Activated CD4-positive, alpha-beta T cell treated with anti-CD3 and anti-CD28 coated beads for 36 hours (primary cell): ENCODE measurements at regions of chr7 and their contacts with region 1.

Region 1: DNA sequence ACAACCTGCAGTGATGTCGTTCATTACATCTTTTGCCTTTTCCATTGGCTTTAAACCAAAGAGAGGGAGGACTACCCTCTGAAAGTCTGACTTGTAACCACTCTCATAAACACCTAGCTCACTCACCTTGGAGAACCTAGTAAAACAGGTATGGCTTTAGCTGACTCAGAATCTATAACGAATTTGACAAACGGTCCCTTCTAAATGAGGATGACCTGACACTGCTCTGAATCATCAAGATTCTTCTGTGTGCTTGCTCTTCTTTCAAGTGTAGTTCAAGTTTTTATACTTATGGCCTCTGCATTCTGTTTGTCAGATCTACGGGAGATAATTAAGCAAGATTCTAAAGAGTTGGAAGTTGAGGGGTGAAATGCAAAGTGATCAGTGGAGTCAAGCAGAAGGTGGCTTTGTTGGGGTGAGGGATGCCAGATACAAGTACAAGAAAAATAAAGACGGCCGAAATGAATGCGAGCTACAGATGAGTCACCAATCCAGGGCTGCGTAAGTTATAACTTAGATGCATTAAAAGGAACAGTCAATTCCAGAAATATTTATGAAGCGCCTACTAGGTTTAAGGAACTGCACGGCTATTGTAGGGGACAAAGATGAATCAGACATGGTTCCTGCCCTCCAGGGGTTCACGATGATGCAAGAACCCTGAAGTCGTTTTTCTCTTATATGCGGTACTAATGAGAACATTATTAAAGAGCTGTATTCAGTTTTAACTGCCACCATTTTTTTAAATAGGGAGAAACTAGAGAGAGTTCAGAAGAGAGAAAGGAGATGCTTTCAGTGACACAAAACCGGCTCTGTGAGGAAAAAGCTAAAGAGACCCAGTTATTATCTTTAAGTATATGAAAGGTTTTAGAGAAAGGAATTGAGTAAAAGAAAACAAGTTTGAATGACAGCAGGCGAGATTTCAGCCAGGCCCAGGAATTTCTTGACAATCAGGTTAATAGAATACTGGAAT is 6.5 kb downstream of the HIPK2 start:
- DNase-seq: no peak
- ATAC-seq: peak; percentile 37
- H3K4me3 Mint-ChIP-seq: peak overlapping the region; percentile 5
- H3K27ac Mint-ChIP-seq: peak overlapping the region; percentile 79
- H3K4me1 Mint-ChIP-seq: peaks cover 90% of the 10 kb centered on the region
- H3K27me3 Mint-ChIP-seq: no peaks in the 10 kb centered on the region

Region 2: GRCh38 chr7:139680676-139681462 is 90.4 kb before region 1 on chr7:
- CTCF ChIA-PET with region 1: no interaction called
- POLR2A ChIA-PET with region 1: interaction called, 6 read pairs
- intact Hi-C with region 1: loop called (anchors 1 kb)
- DNase-seq: peak; percentile 94
- ATAC-seq: peak; percentile 73
- H3K4me3 Mint-ChIP-seq: peak overlapping the region; percentile 68
- H3K27ac Mint-ChIP-seq: peak overlapping the region; percentile 98
- H3K4me1 Mint-ChIP-seq: peaks cover 53% of the 10 kb centered on the region
- H3K27me3 Mint-ChIP-seq: no peaks in the 10 kb centered on the region

Region 3: DNA sequence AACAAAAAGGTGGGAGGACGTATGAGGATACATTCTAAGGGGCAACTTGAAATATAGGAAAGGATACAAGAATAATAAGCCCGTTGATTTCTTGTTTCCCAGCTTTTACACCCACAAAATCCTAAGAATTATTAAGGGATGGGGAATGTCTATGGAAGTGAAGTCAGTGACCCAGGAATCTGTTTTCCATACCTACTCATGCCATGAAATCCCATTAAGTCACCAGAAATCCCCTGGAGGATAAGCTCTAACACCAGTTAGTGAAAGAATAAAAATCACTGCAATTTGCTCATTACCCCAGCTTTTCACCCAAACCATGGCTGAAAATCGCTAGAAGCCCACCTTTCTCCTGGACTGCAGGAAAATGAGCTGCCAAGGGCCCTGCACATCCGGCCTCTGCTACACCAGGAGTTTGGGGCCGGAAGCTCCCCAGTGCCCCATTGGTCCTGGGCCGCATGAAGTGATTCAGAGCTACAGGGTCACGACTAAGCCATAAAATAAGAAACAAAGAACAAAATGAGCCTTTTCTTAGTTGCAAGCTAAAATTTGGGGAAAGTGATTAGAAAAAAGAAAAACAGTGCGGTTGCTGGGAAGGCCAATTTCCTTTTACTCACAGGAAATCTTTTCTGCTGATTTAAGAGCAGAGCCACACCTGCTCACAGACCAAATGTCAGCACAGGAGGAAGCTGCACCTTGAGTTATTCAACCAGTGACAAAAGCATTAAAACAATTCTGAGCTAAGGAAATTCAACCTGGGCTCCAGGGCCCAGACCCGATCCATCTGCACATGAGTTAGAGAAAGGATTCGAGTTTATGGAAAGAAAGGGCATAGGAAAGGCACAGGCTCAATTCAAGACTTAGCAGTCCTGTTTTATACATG is 33.8 kb before region 1 on chr7:
- CTCF ChIA-PET with region 1: interaction called, 4 read pairs
- POLR2A ChIA-PET with region 1: no interaction called
- intact Hi-C with region 1: loop called (anchors 1 to 5 kb)
- DNase-seq: peak; percentile 68
- ATAC-seq: peak; percentile 96
- H3K4me3 Mint-ChIP-seq: peak overlapping the region; percentile 49
- H3K27ac Mint-ChIP-seq: peak overlapping the region; percentile 88
- H3K4me1 Mint-ChIP-seq: peaks cover 71% of the 10 kb centered on the region
- H3K27me3 Mint-ChIP-seq: no peaks in the 10 kb centered on the region

Region 4: DNA sequence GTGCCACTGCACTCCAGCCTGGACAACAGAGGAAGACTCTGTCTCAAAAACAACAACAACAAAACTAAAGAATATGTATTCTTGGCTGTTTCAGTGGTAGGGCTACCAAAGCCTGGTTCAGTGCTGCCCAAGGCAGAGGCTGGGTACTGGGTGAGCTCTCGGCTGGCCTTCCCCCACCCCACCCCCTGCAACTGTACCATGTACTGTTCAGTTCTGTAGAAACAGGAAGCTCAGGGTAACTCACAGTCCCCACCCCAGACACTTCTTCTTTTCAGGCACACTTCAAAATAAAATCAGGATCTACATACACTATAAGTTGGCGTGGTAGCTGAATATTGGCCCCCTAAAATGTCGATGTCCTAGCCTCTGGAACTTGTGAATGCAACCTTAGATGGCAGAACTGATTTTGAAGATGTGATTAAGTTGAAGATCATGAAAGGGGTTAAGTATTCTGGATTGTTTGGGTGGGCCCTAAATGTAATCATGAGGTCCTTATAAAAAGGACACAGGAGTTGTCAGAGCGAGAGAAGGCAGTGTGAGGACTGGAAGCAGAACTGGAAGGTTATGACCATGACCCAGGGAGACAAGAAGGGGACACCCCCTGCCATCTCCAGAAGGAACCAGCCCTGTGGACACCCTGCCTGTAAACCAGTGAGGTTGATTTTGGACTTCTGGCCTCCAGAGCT is 88.9 kb after region 1 on chr7:
- CTCF ChIA-PET with region 1: no interaction called
- POLR2A ChIA-PET with region 1: no interaction called
- intact Hi-C with region 1: no loop called
- DNase-seq: no peak
- ATAC-seq: no peak
- H3K4me3 Mint-ChIP-seq: no peak overlapping the region
- H3K27ac Mint-ChIP-seq: no peak overlapping the region
- H3K4me1 Mint-ChIP-seq: peaks cover 17% of the 10 kb centered on the region
- H3K27me3 Mint-ChIP-seq: peaks cover 6% of the 10 kb centered on the region

Region 5: GRCh38 chr7:140209866-140210609 is 438.8 kb after region 1 on chr7:
- CTCF ChIA-PET with region 1: no interaction called
- POLR2A ChIA-PET with region 1: no interaction called
- intact Hi-C with region 1: loop called in 1 of 2 experiments (anchors 5 kb)
- DNase-seq: peak; percentile 83
- ATAC-seq: peak; percentile 62
- H3K4me3 Mint-ChIP-seq: peak overlapping the region; percentile 2
- H3K27ac Mint-ChIP-seq: peak overlapping the region; percentile 88
- H3K4me1 Mint-ChIP-seq: peaks cover 80% of the 10 kb centered on the region
- H3K27me3 Mint-ChIP-seq: no peaks in the 10 kb centered on the region

Region 6: DNA sequence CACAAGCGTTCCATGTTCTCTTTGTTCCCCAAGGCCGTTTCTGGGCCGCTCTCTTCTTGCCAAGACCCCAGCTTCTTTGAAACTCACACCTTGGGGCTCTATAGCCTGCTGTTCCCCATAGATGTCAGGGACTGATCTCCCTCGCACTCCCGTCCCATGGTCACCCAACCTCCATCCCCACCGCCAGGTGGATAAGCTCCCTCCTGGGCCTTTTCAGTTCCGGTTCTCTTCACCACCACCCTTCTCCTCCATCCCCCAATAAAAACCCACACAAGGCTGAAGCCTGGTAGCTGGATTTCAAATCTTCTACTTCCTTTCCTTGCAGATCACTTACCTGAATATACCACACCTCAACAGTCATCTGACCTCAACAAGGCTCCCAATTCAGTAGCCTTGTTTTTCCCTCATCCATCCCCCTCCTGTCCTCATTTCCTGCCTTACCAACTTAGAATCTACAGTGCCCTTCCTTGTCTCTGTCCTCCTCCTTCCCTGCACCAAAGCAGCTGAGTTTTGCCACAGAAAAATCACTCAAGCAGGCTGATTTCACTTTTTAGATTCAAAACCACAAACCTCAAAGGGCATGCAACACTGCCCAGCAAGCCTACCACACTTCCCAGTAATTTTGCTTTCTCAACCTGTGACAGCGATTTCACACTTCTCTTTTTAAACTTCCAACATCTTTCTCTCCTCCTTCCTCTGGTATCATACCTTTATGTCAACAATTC is 619.3 kb after region 1 on chr7:
- CTCF ChIA-PET with region 1: no interaction called
- POLR2A ChIA-PET with region 1: no interaction called
- intact Hi-C with region 1: loop called in 1 of 2 experiments (anchors 5 kb)
- DNase-seq: peak; percentile 55
- ATAC-seq: peak; percentile 57
- H3K4me3 Mint-ChIP-seq: no peak overlapping the region
- H3K27ac Mint-ChIP-seq: no peak overlapping the region
- H3K4me1 Mint-ChIP-seq: peaks cover 3% of the 10 kb centered on the region
- H3K27me3 Mint-ChIP-seq: no peaks in the 10 kb centered on the region